Dendritic cell treated with granulocyte-macrophage colony-stimulating factor and Interleukin-4, amounts not matched to agents 40 ng/mL and 50 ng/mL, for 4 days (primary cell): ENCODE measurements at regions of chr2 and their contacts with region 1.

Region 1: DNA sequence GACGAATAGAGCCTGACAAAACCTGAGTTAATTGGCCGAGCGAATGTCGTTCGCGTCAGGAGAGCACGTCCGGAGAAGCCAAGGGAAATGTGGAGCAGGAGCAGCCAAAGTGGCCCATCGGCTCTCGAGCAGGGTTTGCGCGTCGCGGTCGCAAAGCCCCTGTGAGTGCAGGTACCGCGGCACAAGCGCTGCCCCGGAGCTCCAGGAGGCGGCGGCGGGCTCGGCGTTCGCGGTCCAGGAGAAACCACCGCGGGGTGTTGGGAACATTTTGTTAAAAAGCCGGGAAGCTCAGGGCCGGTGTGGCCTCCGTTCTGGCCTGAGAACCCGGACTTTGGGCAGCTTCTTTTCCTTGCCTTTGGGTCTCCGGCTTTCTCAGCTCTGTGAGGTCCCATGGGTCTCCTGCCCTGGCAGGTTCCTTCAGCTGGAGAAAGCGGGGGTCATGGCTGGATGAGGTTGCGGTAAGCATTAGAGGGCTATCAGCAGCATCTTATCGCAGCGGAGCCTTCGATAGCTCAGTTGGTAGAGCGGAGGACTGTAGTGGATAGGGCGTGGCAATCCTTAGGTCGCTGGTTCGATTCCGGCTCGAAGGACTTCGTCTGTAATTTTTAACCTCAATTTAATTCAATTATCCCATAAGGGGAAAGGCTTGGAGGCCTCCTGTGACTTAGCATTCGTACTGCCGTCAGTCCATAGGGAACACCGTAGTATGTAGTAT is 1.0 kb upstream of the AGBL5 start:
- H3K4me3 Mint-ChIP-seq: peak overlapping the region; percentile 91
- H3K27ac Mint-ChIP-seq: peak overlapping the region; percentile 80
- H3K4me1 Mint-ChIP-seq: peaks cover 27% of the 10 kb centered on the region
- H3K27me3 Mint-ChIP-seq: peaks cover 6% of the 10 kb centered on the region

Region 2: DNA sequence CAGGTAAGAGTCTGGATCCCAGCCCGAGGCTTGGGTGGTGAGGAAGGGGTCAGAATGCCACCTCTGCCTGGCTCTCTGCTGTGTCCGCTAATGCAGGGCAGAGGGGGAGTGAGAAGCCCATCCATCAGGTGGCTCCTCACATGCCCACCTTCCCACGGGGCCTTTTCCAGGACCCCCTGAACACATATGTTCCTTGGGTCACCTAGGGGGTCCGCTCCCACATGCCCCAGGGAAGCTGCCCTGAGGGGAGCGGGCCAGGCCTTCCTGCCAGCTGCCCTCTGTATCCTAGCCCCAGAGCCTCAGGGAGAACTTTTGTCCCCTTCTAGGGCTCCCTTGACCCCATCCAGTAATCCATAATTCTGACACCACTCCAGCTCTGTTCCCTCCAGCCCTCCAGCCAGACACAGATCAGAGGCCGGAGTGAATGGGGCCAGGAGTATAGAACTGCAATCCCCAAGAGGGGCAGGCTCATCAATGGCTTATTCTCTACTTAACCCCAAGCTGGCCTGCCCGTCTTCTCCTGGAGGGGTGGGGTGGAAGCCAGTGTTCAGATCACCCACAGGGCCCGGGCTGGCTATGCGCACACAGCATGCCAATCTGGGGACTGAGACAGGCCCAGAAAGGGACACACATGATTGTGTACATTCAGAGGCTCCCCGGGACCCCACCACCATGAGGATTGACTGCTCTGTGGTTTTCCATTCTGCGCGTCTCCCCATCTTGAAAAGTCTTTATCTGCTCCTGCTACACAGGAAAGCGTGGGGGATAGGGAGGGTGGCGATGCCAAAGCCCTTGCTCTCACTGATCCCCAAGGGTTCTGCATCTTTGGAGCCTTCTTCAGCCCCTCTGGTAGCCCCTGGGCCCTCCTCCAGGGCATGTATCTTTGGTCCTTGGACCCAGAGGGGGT is 29.0 kb after region 1 on chr2:
- intact Hi-C with region 1: loop called (anchors 2 kb)
- H3K4me3 Mint-ChIP-seq: no peak overlapping the region
- H3K27ac Mint-ChIP-seq: peak overlapping the region; percentile 89
- H3K4me1 Mint-ChIP-seq: peaks cover 74% of the 10 kb centered on the region
- H3K27me3 Mint-ChIP-seq: peaks cover 9% of the 10 kb centered on the region

Region 3: DNA sequence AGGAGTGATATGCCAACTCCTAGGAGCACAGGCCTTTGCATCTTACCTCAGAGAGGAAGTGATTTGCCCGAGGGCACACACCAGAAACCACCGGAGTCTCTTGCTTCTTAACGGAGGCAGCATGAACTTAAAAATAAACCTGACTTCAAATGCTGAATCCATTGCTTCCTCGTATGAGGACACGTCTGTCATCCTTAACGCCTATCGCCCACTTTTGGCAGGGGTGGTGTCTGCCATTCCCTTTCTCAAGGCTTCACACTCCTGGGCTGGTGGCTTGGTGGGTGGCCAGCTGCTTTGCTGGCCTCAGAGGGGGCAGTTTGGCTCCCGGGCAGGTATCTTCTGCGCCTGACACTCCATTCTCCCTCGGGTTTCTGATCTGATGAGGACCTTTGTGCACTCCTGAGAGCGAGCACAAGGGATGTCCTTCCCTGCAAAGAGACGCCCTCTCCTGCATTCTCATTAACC is 85.1 kb after region 1 on chr2:
- intact Hi-C with region 1: no loop called
- H3K4me3 Mint-ChIP-seq: peak overlapping the region; percentile 95
- H3K27ac Mint-ChIP-seq: peak overlapping the region; percentile 93
- H3K4me1 Mint-ChIP-seq: peaks cover 20% of the 10 kb centered on the region
- H3K27me3 Mint-ChIP-seq: peaks cover 5% of the 10 kb centered on the region